Esophagus muscularis mucosa (tissue), 4 donors: ENCODE measurements at regions of chr10 and their contacts with region 1.

Region 1: GRCh38 chr10:103859161-103860086 is 4.0 kb upstream of the SH3PXD2A start:
- DNase-seq: no peak
- H3K4me3 ChIP-seq: no peak overlapping the region
- H3K27ac ChIP-seq: no peak overlapping the region
- H3K4me1 ChIP-seq: peaks cover 3 to 28% (median 20%) of the 10 kb centered on the region in 4 donors
- H3K27me3 ChIP-seq: no peaks in the 10 kb centered on the region
- CTCF ChIP-seq: peak; percentile 67 to 79 (median 78)
- EP300 ChIP-seq: no peak
- POLR2A ChIP-seq: no peak

Region 2: GRCh38 chr10:103605359-103606095 is 253.9 kb before region 1 on chr10:
- intact Hi-C with region 1: loop called (anchors 10 kb)
- DNase-seq: no peak
- H3K4me3 ChIP-seq: no peak overlapping the region
- H3K27ac ChIP-seq: peak overlapping the region in 2 of 4 donors; percentile 9 to 19
- H3K4me1 ChIP-seq: peaks cover 0 to 17% (median 4%) of the 10 kb centered on the region in 4 donors
- H3K27me3 ChIP-seq: no peaks in the 10 kb centered on the region
- CTCF ChIP-seq: peak; percentile 87 to 94 (median 90)
- EP300 ChIP-seq: no peak
- POLR2A ChIP-seq: no peak

Region 3: DNA sequence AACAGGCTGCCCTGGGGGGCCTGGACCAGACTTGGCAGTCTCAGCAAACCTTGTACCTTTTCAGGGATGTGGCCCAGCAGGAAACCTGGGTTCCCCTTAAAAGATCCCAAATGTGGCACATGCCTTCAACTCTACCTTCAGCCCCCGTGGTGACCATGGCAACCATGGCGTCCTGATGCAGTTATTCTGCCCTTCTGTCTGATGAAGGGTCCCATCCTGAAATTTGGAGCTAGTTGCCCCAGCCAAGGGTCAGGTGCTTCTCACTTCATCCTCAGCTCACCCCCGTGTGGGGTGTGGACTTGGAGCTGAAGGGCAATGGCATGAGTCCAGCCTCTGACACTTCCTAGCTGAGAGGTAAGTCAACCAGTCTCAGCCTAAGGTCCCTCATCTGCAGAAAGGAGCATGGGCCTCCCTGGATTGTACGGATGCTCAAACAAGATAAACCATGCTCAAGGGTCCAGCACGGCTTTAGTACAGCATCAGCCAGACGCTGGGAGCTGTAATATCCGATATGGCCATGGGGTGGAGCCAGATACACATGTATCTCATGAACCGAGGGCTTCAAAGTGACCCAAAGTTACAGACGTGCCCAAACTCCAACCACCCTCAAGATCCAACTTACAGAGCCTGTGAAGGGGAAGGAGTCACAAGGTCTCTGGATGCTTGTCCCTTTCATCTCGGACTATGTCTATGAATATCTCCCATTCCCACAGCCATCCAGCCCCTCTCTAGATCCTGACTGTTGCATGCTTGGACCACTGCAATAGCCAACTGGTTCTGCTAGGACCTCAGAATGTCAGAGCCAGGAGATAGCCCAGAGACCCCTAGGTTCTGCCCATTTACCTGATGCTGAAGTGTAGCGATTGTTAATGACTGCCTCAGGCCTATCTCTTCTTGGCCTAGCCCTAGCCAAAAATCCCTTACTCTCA is 146.6 kb before region 1 on chr10:
- intact Hi-C with region 1: loop called (anchors 1 kb)
- DNase-seq: peak; percentile 97
- H3K4me3 ChIP-seq: no peak overlapping the region
- H3K27ac ChIP-seq: no peak overlapping the region
- H3K4me1 ChIP-seq: peaks cover 0 to 23% (median 11%) of the 10 kb centered on the region in 4 donors
- H3K27me3 ChIP-seq: no peaks in the 10 kb centered on the region
- CTCF ChIP-seq: peak; percentile 95 to 98 (median 97)
- EP300 ChIP-seq: no peak
- POLR2A ChIP-seq: no peak

Region 4: DNA sequence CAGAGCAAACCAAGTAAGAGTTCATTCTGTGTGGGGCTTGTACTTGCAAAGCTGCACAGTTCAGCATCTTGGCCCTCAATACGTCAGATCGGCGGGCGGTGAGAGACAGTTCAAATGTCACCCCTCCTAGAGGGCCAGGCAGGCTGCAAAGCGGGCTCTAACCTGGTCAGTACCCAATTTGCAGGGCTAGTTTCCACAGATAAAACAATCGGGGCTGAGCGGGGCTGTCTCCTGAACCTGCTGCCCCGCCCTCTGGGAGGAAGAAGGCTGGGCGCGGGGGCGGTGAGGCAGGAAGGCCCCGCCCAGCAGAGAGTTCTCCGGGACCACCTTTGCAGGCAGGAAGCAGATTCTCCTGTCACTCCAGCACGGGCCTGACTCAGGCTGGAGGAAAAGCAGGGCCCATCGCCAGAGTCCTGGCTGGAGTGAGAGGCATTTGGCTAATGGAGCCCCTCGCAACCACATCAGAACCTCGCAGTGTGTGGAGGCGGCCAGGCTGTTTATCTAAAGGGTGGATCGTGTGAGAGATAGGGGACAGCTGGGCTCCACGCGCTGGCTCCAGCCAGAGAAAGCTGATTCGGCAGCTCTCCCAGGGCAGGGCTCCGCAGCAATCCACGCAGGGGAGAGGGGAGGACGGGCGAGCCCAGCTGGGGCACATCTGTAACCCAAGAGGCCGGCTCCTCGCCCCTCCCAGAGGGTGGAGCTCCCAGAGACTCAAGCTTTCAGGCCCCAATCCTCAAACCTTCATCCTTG is 87.2 kb before region 1 on chr10:
- intact Hi-C with region 1: loop called (anchors 10 kb)
- DNase-seq: peak; percentile 97
- H3K4me3 ChIP-seq: peak overlapping the region; percentile 48 to 56 (median 52)
- H3K27ac ChIP-seq: peak overlapping the region; percentile 74 to 85 (median 76)
- H3K4me1 ChIP-seq: peaks cover 20 to 36% (median 27%) of the 10 kb centered on the region in 4 donors
- H3K27me3 ChIP-seq: no peaks in the 10 kb centered on the region
- CTCF ChIP-seq: no peak
- EP300 ChIP-seq: no peak
- POLR2A ChIP-seq: no peak

Region 5: DNA sequence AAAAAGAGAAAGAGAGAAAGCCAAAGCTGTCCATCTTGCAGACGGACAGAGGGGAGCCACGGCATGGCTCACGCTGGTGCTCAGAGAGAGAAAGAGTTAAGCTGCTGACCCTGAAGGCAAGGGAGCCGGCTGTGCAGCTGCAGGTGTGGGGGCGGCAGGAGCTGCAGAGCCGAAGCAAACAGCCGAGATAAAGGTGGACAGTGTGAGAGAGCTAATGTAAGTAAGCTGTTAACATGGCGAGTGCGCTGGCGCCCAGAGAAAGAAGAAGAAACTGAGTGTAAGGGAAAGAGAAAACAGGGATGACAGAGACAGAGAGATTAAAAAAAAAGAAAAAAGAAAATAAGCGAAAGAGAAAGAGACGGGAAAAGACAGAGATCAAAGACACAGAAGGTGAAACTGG is 208.1 kb after region 1 on chr10:
- intact Hi-C with region 1: no loop called
- DNase-seq: no peak
- H3K4me3 ChIP-seq: no peak overlapping the region
- H3K27ac ChIP-seq: no peak overlapping the region
- H3K4me1 ChIP-seq: no peaks in the 10 kb centered on the region
- H3K27me3 ChIP-seq: no peaks in the 10 kb centered on the region
- CTCF ChIP-seq: no peak
- EP300 ChIP-seq: no peak
- POLR2A ChIP-seq: no peak

Region 6: GRCh38 chr10:104080762-104081161 is 221.3 kb after region 1 on chr10:
- intact Hi-C with region 1: no loop called
- DNase-seq: no peak
- H3K4me3 ChIP-seq: no peak overlapping the region
- H3K27ac ChIP-seq: no peak overlapping the region
- H3K4me1 ChIP-seq: peaks cover 0 to 5% (median 0%) of the 10 kb centered on the region in 4 donors
- H3K27me3 ChIP-seq: no peaks in the 10 kb centered on the region
- CTCF ChIP-seq: peak in 1 of 3 experiments; percentile 22
- EP300 ChIP-seq: no peak
- POLR2A ChIP-seq: no peak